Body of pancreas (tissue), 4 donors: ENCODE measurements at regions of chr1 and their contacts with region 1.

Region 1: GRCh38 chr1:206663832-206664652 is 20.7 kb upstream of the MAPKAPK2 start:
- DNase-seq: peak; percentile 69 to 77 (median 73)
- ATAC-seq: peak; percentile 49
- H3K4me3 ChIP-seq: no peak overlapping the region
- H3K27ac ChIP-seq: peak overlapping the region in 1 of 4 donors; percentile 32
- H3K4me1 ChIP-seq: peaks cover 26% of the 10 kb centered on the region
- H3K27me3 ChIP-seq: no peaks in the 10 kb centered on the region
- CTCF ChIP-seq: peak; percentile 72 to 94 (median 83)
- POLR2A ChIP-seq: no peak

Region 2: GRCh38 chr1:206579747-206580437 is 84.2 kb before region 1 on chr1:
- intact Hi-C with region 1: no loop called
- DNase-seq: peak in 3 of 4 donors; percentile 34 to 84 (median 47)
- ATAC-seq: no peak
- H3K4me3 ChIP-seq: no peak overlapping the region
- H3K27ac ChIP-seq: peak overlapping the region in 2 of 4 donors; percentile 21 to 45
- H3K4me1 ChIP-seq: peaks cover 11% of the 10 kb centered on the region
- H3K27me3 ChIP-seq: no peaks in the 10 kb centered on the region
- CTCF ChIP-seq: no peak
- POLR2A ChIP-seq: peak in 1 of 3 donors; percentile 24

Region 3: DNA sequence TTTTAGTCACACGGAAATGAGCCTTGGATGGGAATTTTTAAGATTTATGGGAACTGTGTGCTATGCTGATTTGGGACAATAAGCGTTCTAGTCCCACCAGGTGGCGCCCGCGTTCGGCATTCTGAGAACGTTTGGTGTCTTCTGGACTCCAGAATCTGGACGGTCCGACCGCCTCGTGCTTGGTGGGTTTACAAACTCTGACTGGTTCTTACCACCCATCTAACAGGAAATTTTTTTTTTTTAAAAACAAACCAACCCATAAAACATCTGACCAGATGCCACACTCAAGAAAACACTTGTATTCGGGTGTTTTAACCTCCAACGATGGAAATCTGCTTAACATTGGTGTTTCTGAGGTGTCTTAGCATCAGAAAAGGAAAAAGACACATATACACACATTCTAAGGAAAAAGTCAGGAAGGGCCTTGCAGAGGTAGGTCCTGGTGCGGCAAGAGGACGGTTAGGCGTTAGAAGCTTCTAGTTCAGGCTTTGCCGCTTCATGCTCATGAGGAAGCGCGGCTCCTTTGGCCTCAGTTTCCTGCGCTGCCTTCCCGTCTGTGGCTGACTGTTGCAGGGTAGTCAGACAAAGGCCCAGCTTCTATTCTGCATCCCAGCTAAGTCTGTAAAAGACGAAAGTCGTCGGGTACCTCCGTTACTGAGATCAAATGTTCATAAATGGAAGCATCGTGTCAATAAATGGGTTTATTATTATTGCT is 29.5 kb before region 1 on chr1:
- intact Hi-C with region 1: loop called (anchors 5 kb)
- DNase-seq: peak; percentile 91 to 97 (median 93)
- ATAC-seq: peak; percentile 69
- H3K4me3 ChIP-seq: no peak overlapping the region
- H3K27ac ChIP-seq: peak overlapping the region; percentile 52 to 87 (median 76)
- H3K4me1 ChIP-seq: peaks cover 27% of the 10 kb centered on the region
- H3K27me3 ChIP-seq: no peaks in the 10 kb centered on the region
- CTCF ChIP-seq: peak; percentile 64 to 87 (median 83)
- POLR2A ChIP-seq: no peak